IMR-90 (cell line): ENCODE measurements at regions of chr19 and their contacts with region 1.

Region 1: DNA sequence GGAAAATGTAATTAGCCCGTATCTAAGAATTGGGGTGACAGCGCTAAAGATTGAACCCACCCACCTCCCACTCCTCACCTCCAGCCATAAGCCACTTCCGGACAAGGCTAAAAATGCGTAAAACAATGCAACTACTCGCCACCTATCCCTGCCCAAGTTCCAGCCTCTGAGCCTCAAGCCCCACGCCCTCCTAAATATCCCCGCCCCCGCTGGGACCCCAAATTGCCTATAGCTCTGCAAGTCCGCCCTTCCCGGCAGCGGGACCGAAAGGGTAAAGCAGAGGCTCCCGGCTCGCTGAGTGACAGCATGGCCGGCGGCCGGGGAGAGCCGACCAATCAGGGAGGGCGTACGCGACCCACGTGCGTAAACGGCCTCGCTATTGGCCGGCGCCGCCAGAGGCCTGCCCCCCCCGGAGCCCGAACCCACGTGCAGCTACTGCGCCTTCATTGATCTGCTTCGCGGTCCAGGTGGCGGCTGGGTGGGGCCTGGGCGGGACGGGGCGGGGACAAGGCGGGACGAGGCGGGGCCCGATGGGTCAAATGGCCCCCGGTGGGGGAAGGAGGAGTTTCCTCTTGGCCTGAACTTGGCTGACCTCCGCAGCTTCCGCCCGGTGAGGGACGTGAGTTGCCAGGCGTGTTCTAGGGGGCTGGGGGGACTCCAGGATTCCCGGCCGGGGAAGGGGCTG is at the start of gene TLE6:
- DNase-seq: peak; percentile 84
- ATAC-seq: peak; percentile 100
- H3K4me3 ChIP-seq: peak within 1 kb of the TSS; percentile 72
- H3K27ac ChIP-seq: no peak within 1 kb of the TSS
- H3K4me1 ChIP-seq: peaks cover 6% of the 10 kb centered on the region
- H3K27me3 ChIP-seq: no peaks in the 10 kb centered on the region
- CTCF ChIP-seq: no peak
- POLR2A ChIP-seq: no peak
- RAD21 ChIP-seq: no peak
- total RNA-seq, gene TLE6: under 0.01 and 0.28 TPM in 2 replicates

Region 2: DNA sequence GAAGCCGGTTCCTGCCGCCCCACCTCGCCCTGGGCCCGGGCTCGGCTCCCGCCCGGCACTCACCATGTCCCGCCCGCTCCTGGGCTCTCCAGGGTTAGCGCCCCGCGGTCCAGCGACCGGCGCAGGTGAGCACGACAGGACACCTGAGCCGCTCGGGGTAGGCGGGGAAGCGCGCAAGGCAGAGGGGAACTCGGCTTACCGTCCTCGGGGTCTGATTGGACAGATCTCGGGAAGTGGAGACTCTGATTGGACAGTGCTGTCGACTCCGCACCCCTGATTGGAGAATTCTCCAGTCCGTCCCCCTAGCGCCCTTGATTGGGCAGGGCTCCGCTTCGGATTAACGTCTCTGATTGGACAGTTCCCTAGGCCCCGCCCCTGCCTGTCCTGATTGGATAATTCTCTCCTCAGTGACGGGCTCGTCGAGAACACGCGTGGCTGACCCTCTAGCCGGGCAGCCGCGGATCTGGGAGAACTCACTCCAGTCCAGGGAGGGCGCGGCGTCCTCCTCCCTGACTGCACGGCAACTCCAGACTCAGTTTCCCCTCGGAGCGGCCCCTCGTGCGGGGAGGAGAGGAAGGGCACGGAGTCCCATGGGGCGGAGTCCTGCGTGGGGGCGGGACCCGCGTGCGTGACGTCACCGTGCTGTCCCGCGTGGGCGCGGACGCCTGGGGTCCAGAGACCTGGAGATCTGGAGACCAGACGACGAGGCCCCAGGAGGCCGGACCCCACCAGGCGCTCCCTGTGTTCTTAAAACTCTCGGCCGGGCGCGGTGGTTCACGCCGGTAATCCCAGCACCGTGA is 32.2 kb before region 1 on chr19 and contains the start of gene ZNF77:
- CTCF ChIA-PET with region 1: no interaction called
- POLR2A ChIA-PET with region 1: no interaction called
- dilution Hi-C with region 1: no loop called
- in situ Hi-C with region 1: no loop called
- intact Hi-C with region 1: no loop called
- DNase-seq: peak; percentile 99
- ATAC-seq: peak; percentile 99
- H3K4me3 ChIP-seq: peak within 1 kb of the TSS; percentile 87
- H3K27ac ChIP-seq: peak within 1 kb of the TSS; percentile 82
- H3K4me1 ChIP-seq: peaks cover 5% of the 10 kb centered on the region; the same call in 1 of the 2 replicates
- H3K27me3 ChIP-seq: no peaks in the 10 kb centered on the region
- CTCF ChIP-seq: no peak
- POLR2A ChIP-seq: peak; percentile 49; the same call in 1 of the 2 replicates
- RAD21 ChIP-seq: no peak
- total RNA-seq, gene ZNF77: 5.3 and 6.5 TPM in 2 replicates

Region 3: DNA sequence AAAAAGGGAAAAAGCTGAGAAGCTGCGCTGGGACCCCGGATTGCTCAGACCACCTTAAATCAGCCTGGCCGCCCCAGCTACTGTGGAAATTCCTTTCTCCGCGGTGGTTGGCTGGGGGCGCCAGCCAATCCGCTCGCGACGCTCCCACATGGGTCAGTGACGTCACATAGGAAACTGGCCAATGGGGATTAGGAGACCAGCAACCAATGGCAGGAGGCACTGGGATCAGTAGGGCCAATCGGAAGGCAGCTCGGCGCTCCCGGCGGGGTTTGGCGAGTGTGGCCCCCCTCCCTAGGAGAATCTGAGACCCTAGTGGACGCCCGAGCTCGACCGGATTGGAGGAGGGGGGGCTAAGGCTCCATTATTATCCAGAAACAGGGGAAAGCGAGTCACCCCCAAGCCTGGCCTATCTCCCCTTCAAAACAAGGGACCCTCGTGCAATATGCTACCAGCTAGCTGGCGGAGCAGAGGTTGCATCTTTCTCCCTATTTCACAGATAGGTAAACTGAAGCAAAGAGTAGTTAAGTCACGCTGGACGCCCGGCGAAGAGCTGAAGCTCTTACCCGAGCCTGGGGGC is 58.5 kb after region 1 on chr19:
- CTCF ChIA-PET with region 1: no interaction called
- POLR2A ChIA-PET with region 1: interaction called, 3 read pairs
- dilution Hi-C with region 1: no loop called
- in situ Hi-C with region 1: no loop called
- intact Hi-C with region 1: loop called (anchors 2 kb)
- DNase-seq: peak; percentile 99
- ATAC-seq: peak; percentile 93
- H3K4me3 ChIP-seq: peak overlapping the region; percentile 50
- H3K27ac ChIP-seq: peak overlapping the region; percentile 47
- H3K4me1 ChIP-seq: peaks cover 12% of the 10 kb centered on the region
- H3K27me3 ChIP-seq: peaks cover 7% of the 10 kb centered on the region
- CTCF ChIP-seq: no peak
- POLR2A ChIP-seq: peak; percentile 30; the same call in 1 of the 2 replicates
- RAD21 ChIP-seq: no peak